ENCODE measurements at regions of chr1 and their contacts with region 1.

Region 1: DNA sequence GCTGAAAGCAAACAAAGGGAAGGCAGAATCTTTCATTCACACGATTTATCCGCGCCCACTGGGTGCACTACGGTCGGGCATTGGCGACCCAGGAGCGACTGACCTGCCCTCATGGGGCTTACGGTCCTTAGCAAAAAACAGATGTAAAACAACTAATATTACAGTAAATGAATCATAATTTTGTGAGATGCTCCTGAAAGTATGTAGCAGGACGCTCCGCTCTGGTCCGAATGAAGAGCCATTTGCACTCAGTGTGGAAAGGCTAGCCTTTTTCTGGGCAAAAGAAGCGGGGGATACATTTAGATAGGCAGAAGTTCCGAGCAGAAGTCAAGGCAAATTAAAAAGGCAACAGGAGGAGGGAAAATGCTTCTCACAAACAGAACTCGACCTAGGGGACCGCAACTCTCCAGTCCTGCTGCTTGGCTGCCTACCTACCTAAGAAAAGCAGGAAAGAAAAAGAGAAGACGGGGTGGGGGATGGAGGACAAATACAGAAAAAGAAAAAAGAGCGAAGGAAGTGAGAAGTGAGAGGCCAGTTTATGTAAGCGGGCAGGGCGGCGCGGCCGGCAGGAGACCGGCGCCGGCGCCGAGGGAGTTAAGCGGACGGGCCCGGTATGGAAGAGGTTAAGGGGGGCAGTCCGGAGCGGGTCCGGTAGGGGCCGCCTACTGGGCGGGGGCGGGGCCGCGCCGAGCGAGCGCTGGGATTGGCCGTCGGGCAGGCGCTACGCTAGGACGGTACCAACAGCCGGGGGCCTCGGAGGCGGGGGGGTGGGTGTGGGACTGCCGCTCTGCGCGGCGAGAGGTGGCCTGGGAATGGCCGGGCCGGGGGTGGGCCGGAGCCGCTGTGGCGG is at the start of gene FAM20B:
- DNase-seq: peak; percentile 96
- H3K4me3 ChIP-seq: peak within 1 kb of the TSS; percentile 78
- H3K27ac ChIP-seq: peak within 1 kb of the TSS; percentile 82
- H3K4me1 ChIP-seq: peaks cover 50% of the 10 kb centered on the region
- CTCF ChIP-seq: no peak
- total RNA-seq, gene FAM20B: 16.6 and 17.1 TPM in 2 replicates

Region 2: GRCh38 chr1:178581351-178582303 is 443.7 kb before region 1 on chr1:
- CTCF ChIA-PET with region 1: no interaction called
- POLR2A ChIA-PET with region 1: interaction called, 13 read pairs
- intact Hi-C with region 1: loop called (anchors 1 kb)
- DNase-seq: peak; percentile 98
- H3K4me3 ChIP-seq: peak overlapping the region; percentile 67
- H3K27ac ChIP-seq: peak overlapping the region; percentile 99
- H3K4me1 ChIP-seq: peaks cover 87% of the 10 kb centered on the region
- CTCF ChIP-seq: peak; percentile 64

Region 3: DNA sequence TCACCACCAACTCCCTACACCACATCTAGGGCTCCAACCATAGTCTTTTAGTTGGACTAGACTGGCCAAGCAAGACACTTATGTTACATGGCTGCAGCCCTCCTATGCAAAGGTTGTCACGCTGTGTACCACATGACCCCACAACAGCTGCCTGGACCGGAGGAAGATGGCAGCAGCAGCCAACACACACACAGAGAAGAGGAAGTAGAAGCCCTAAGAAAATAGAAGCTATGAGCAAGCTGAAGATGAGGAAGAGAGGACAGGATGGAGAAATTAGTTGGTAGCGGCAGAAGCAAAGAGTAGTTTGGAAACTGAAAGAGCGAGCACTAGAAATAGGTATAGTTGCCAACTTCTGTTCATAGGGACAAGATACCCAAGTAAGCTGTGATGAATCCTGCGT is 361.1 kb before region 1 on chr1:
- CTCF ChIA-PET with region 1: no interaction called
- POLR2A ChIA-PET with region 1: interaction called, 3 read pairs
- intact Hi-C with region 1: loop called (anchors 5 kb)
- DNase-seq: peak; percentile 85
- H3K4me3 ChIP-seq: peak overlapping the region; percentile 15
- H3K27ac ChIP-seq: peak overlapping the region; percentile 75
- H3K4me1 ChIP-seq: peaks cover 68% of the 10 kb centered on the region
- CTCF ChIP-seq: no peak

Region 4: DNA sequence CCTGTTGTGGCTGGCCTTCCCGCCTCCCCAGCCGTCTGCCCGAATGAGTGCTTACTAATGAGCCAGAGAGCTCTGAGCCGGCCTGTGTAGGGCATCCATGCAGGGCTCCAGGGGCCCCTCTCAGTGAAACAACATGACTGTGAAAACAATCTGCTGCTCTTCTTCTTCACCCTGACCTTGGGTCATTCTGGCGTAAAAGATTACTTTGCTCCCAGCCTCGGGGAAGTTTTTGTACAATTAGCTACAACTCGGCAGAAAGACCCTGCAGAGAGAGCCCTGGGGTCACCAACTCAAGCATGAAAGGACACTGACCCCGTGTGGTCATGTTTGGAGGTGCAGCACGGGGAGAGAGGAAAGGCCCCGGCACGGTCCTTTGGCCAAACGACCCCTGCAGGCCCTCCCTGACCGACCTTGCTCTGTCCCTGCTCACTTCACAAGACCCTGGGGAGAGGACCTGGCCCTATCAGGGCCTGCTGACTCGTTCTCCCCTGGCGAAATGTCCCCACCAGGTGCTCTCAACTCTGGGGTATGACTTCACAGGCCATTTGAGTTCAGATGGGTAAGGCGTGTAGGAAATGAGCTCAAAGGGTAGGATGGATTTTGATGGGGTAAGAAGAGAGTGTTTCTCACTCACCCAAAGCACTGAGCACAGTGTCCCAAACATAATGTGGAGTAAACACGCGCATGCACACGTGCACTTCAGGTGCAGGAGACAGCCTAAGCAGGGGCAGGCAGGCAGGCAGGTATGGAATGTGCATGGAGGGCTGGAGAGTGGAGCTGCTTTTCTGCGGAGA is 22.6 kb before region 1 on chr1:
- CTCF ChIA-PET with region 1: interaction called, 7 read pairs
- POLR2A ChIA-PET with region 1: interaction called, 10 read pairs
- intact Hi-C with region 1: no loop called
- DNase-seq: peak; percentile 90
- H3K4me3 ChIP-seq: no peak overlapping the region
- H3K27ac ChIP-seq: peak overlapping the region; percentile 9
- H3K4me1 ChIP-seq: peaks cover 25% of the 10 kb centered on the region
- CTCF ChIP-seq: peak; percentile 97

Region 5: DNA sequence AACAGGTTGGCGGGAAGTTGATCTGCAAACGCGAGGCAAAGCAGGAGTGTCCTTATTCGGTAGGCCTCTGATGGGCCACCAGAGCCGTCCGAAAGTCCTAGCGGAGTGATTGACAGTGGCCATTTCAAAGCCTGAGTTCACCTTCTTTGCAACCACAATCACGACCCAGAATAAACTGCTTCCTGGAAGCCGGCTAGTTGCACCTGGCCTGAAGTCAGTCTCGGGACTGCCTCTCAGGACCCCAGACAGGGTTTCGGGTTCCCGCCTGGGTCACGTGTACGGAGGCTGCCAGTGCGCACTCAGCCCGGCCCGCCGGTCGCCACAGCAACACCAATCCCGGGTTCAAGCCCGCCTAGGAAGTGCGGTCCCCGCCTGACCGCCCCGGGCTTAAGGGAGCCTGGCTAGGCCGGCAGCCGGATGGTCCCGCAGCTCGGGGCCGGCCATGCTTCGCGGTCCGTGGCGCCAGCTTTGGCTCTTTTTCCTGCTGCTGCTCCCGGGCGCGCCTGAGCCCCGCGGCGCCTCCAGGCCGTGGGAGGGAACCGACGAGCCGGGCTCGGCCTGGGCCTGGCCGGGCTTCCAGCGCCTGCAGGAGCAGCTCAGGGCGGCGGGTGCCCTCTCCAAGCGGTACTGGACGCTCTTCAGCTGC is 56.5 kb after region 1 on chr1 and contains the start of gene TOR3A:
- CTCF ChIA-PET with region 1: interaction called, 6 read pairs
- POLR2A ChIA-PET with region 1: interaction called, 27 read pairs
- intact Hi-C with region 1: loop called (anchors 1 kb)
- DNase-seq: peak; percentile 96
- H3K4me3 ChIP-seq: peak within 1 kb of the TSS; percentile 90
- H3K27ac ChIP-seq: peak within 1 kb of the TSS; percentile 91
- H3K4me1 ChIP-seq: peaks cover 37% of the 10 kb centered on the region
- CTCF ChIP-seq: no peak
- total RNA-seq, gene TOR3A: 32.9 and 49.0 TPM in 2 replicates

Region 6: GRCh38 chr1:179365320-179366092 is 340.2 kb after region 1 on chr1 and contains the start of gene AXDND1:
- CTCF ChIA-PET with region 1: no interaction called
- POLR2A ChIA-PET with region 1: no interaction called
- intact Hi-C with region 1: loop called (anchors 5 kb)
- DNase-seq: peak; percentile 91
- H3K4me3 ChIP-seq: peak within 1 kb of the TSS; percentile 92
- H3K27ac ChIP-seq: peak within 1 kb of the TSS; percentile 91
- H3K4me1 ChIP-seq: peaks cover 11% of the 10 kb centered on the region
- CTCF ChIP-seq: peak; percentile 25; the same call in 1 of the 2 replicates
- total RNA-seq, gene AXDND1: 0.16 and 0.23 TPM in 2 replicates

Measured in OCI-LY7 (cell line).